B cell (primary cell): ENCODE measurements at regions of chr5 and their contacts with region 1.

Region 1: DNA sequence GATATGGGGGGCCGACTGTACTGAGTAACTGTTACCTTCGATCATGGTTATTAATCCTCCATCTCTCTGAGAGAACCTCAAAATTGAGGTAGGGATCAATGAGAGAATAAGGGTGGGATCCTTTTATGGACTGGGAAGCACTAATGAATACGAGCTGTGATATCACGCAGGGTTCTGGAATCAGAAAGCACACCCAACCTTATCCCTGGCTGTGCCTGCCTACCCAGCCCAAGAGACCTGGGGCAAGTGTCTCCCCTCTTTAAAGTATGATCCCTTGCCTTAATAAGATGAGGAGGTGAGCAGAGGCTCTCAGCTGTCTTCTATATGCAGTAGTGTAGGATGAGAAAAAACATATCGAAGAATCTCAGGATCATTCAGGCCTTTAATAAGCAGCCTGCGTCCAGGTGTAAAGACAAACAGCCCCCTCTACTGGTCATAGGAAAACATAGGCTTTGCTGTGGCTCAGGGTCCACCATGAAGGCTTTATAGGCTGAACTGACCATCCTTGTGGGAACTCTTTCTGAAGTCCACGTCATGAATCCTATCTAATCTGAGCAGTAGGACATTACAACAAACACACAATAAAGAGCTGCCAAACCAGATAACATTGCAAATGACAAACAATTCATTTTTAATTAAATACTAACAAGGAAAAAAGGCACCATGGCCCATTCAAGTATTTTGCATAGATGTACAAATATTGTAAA is 16.8 kb downstream of the NIPAL4 start:
- DNase-seq: peak; percentile 73
- ATAC-seq: peak; percentile 39
- H3K4me3 ChIP-seq: no peak overlapping the region
- H3K4me3 Mint-ChIP-seq: no peak overlapping the region
- H3K27ac ChIP-seq: peak overlapping the region; percentile 32 to 69
- H3K27ac Mint-ChIP-seq: peak overlapping the region; percentile 98
- H3K4me1 ChIP-seq: peaks cover 55 to 72% of the 10 kb centered on the region in 2 donors
- H3K4me1 Mint-ChIP-seq: peaks cover 78% of the 10 kb centered on the region
- H3K27me3 ChIP-seq: no peaks in the 10 kb centered on the region
- H3K27me3 Mint-ChIP-seq: no peaks in the 10 kb centered on the region
- CTCF ChIP-seq: peak; percentile 84

Region 2: DNA sequence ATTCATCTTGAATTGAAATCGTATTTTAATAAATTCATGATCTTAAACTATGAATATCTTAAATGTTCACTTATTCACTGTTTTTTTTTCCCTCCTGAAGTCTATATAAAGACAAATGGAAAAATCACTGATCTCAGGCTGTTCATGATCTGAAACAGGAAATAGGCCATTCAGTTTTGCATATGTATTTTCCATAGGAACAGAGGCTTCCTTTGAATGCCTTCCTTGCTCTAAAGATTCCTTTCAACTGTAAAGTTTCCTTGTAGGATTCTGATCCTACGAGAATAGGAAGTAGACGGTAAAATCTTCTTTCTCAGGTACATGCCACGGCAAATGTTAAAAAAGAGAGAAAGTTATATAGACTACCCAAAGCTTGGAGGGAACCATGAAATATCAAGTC is 821.1 kb before region 1 on chr5:
- CTCF ChIA-PET with region 1: no interaction called
- POLR2A ChIA-PET with region 1: no interaction called
- intact Hi-C with region 1: no loop called
- DNase-seq: no peak
- ATAC-seq: no peak
- H3K4me3 ChIP-seq: no peak overlapping the region
- H3K4me3 Mint-ChIP-seq: no peak overlapping the region
- H3K27ac ChIP-seq: no peak overlapping the region
- H3K27ac Mint-ChIP-seq: no peak overlapping the region
- H3K4me1 ChIP-seq: no peaks in the 10 kb centered on the region
- H3K4me1 Mint-ChIP-seq: no peaks in the 10 kb centered on the region
- H3K27me3 ChIP-seq: no peaks in the 10 kb centered on the region
- H3K27me3 Mint-ChIP-seq: no peaks in the 10 kb centered on the region
- CTCF ChIP-seq: no peak

Region 3: GRCh38 chr5:157148734-157149615 is 327.9 kb before region 1 on chr5:
- CTCF ChIA-PET with region 1: no interaction called
- POLR2A ChIA-PET with region 1: no interaction called
- intact Hi-C with region 1: loop called (anchors 5 kb)
- DNase-seq: peak; percentile 80
- ATAC-seq: peak; percentile 81
- H3K4me3 ChIP-seq: no peak overlapping the region
- H3K4me3 Mint-ChIP-seq: no peak overlapping the region
- H3K27ac ChIP-seq: no peak overlapping the region
- H3K27ac Mint-ChIP-seq: no peak overlapping the region
- H3K4me1 ChIP-seq: peaks cover 2 to 5% of the 10 kb centered on the region in 2 donors
- H3K4me1 Mint-ChIP-seq: peaks cover 5% of the 10 kb centered on the region
- H3K27me3 ChIP-seq: no peaks in the 10 kb centered on the region
- H3K27me3 Mint-ChIP-seq: no peaks in the 10 kb centered on the region
- CTCF ChIP-seq: peak; percentile 97

Region 4: DNA sequence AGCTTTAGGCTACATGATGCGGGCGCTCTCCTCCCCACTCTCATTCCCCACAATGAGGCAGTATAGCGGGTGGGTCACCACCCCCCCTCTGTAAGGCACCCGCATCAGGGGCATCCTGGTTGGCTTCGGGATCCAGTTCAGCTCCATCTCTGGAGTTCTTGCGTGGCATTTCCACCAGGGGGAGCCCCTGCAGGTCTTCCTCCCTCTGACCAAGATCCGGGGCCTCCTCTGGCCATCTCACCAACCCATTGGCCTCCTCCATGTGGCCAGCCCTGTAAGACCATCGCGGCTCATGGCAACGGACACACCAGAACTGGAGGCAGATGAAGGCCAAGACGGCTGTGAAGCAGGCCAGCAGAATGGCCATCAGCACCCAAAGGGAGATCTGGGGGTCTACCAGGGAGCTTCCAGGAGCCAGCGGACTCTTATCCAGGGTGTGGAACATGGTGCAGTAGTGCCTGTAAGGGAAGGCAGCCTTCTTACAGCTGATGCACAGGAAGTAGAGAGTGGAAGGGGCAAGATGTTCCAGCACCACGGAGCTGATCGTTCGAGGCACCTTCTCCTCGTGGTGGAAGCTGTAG is 133.9 kb before region 1 on chr5:
- CTCF ChIA-PET with region 1: interaction called, 11 read pairs
- POLR2A ChIA-PET with region 1: no interaction called
- intact Hi-C with region 1: loop called (anchors 5 kb)
- DNase-seq: peak; percentile 52
- ATAC-seq: peak; percentile 49
- H3K4me3 ChIP-seq: no peak overlapping the region
- H3K4me3 Mint-ChIP-seq: no peak overlapping the region
- H3K27ac ChIP-seq: no peak overlapping the region
- H3K27ac Mint-ChIP-seq: no peak overlapping the region
- H3K4me1 ChIP-seq: no peaks in the 10 kb centered on the region
- H3K4me1 Mint-ChIP-seq: no peaks in the 10 kb centered on the region
- H3K27me3 ChIP-seq: no peaks in the 10 kb centered on the region
- H3K27me3 Mint-ChIP-seq: no peaks in the 10 kb centered on the region
- CTCF ChIP-seq: peak; percentile 70

Region 5: DNA sequence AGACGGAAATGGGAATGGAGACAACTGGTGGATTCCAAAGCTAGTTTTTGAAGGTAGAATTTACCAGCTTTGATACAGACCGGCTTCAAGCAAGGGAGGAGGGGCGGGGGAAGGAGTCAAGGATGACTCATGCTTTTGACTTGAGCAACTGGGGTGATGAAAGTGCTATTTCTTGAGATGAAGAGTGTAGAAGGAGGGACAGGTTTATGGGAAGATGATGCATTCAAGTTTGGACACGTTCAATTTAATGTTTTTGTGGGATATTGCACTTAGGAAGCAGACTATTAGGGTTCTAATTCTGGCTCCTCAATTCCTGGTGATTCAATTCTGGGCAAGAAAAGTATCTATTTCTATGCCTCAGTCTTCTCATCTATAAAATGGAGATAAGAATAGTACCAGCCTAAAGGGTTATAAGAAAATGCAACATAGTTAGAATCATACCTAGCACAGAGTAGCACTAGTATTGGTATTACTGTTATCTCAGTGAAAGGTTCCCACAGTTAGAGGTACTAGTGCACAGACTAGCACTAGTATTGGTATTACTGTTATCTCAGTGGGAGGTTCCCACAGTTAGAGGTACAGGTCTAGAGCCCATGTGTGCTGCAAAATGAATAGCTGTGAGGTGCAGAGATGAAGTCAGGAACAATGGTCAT is 12.2 kb before region 1 on chr5:
- CTCF ChIA-PET with region 1: interaction called, 31 read pairs
- POLR2A ChIA-PET with region 1: interaction called, 4 read pairs
- intact Hi-C with region 1: loop called (anchors 2 kb)
- DNase-seq: peak; percentile 6
- ATAC-seq: peak; percentile 39
- H3K4me3 ChIP-seq: no peak overlapping the region
- H3K4me3 Mint-ChIP-seq: peak overlapping the region; percentile 5
- H3K27ac ChIP-seq: no peak overlapping the region
- H3K27ac Mint-ChIP-seq: peak overlapping the region; percentile 16
- H3K4me1 ChIP-seq: peaks cover 18 to 30% of the 10 kb centered on the region in 2 donors
- H3K4me1 Mint-ChIP-seq: peaks cover 53% of the 10 kb centered on the region
- H3K27me3 ChIP-seq: no peaks in the 10 kb centered on the region
- H3K27me3 Mint-ChIP-seq: no peaks in the 10 kb centered on the region
- CTCF ChIP-seq: no peak

Region 6: GRCh38 chr5:157718519-157718918 is 241.7 kb after region 1 on chr5:
- CTCF ChIA-PET with region 1: interaction called, 15 read pairs
- POLR2A ChIA-PET with region 1: no interaction called
- intact Hi-C with region 1: loop called (anchors 5 kb)
- DNase-seq: peak; percentile 74
- ATAC-seq: peak; percentile 95
- H3K4me3 ChIP-seq: no peak overlapping the region
- H3K4me3 Mint-ChIP-seq: peak overlapping the region; percentile 18
- H3K27ac ChIP-seq: peak overlapping the region in 1 of 2 donors; percentile 30
- H3K27ac Mint-ChIP-seq: peak overlapping the region; percentile 42
- H3K4me1 ChIP-seq: peaks cover 19 to 20% of the 10 kb centered on the region in 2 donors
- H3K4me1 Mint-ChIP-seq: peaks cover 15% of the 10 kb centered on the region
- H3K27me3 ChIP-seq: no peaks in the 10 kb centered on the region
- H3K27me3 Mint-ChIP-seq: no peaks in the 10 kb centered on the region
- CTCF ChIP-seq: peak; percentile 80